Psoas muscle (tissue), 8 donors: ENCODE measurements at regions of chr4 and their contacts with region 1.

Region 1: DNA sequence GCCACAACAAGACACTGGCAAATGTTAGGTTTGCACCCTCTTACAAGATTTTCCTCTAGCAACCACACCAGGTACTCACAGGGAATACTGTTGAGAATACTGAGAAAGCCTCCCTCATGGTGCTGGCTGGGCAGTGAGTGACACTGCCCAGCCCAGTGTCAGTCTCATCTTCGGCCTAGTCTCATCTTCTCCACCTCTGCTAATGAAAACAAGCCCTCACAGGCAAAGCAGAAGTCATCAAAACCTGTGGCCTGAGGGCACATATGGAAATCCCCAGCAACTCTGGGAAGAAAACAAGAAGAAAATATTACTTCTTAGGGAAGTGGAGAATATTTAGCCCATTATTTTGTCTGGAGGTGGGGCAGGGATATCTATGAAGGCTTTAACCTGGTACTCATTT is 7.9 kb upstream of the ADAM29 start:
- DNase-seq: no peak
- ATAC-seq: no peak
- H3K4me3 ChIP-seq: no peak overlapping the region
- H3K27ac ChIP-seq: no peak overlapping the region
- H3K4me1 ChIP-seq: no peaks in the 10 kb centered on the region
- H3K27me3 ChIP-seq: no peaks in the 10 kb centered on the region
- CTCF ChIP-seq: no peak

Region 2: DNA sequence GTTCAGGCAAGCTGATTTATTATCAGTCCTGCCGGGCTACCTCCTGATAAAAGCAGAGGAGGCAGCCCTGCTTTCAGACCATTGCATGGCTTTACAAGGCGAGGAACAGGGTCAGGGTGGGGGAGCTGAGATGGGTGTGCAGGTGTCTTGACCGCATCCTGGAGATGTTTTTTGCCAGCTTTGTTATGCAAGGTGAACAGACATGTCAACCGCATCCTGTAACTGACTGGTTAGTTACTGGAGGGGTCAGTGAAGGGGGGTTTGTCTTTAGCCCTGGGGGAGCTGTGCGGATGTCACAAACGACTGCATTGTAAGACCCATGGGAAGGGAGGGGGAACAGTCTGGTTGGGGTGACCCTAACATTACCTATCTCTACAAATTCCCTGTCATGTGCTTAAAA is 17.9 kb after region 1 on chr4:
- intact Hi-C with region 1: loop called in 1 of 2 experiments (anchors 2 kb)
- DNase-seq: no peak
- ATAC-seq: no peak
- H3K4me3 ChIP-seq: no peak overlapping the region
- H3K27ac ChIP-seq: no peak overlapping the region
- H3K4me1 ChIP-seq: no peaks in the 10 kb centered on the region
- H3K27me3 ChIP-seq: no peaks in the 10 kb centered on the region
- CTCF ChIP-seq: no peak